BJ (cell line): ENCODE measurements at regions of chr1 and their contacts with region 1.

Region 1: DNA sequence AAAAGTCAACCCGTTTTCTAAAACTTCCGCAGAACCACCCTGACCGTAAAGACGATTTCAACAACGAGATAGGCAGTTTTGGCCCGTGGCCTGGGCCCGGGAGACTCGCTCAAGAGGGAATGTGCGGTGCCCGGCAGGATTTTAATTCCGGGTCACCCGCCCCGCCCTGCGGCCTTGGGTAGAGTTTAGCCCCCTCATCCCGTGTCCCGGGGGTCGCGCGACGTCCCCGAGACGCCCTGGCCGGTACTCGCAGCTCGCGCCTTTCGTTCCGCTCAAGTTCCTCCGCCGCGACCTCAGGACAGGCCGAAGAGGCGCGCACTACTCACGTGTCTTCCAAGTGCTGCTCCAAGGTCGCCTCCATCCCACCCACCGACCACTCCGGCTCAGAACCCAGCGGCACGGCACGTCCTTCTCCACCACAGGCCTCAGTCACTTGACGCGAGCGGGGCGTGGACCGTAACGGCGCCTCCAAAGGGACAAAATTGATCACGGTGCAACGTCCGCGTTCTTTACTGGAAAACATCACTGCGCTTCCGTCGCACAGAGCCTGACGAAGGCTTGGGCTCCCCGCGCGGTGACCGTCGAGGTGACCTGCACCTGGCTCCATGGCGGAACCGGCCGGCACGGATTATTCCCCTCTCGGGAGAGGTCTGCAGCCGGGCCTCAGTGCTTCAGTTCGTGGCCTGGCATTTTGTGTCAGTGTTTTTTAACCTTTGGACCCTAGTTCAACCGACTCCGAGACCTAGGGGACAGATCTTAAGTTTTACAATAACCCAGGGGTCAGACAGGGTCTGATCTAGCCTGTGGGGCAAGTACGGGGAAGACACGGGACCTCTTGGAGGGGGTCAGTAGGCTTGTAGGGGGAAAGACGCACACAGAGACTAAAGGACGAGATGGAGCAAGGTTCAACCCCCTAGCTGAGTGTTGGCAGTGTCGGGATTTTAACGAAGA is at the start of gene LAMTOR5:
- DNase-seq: peak; percentile 68
- H3K4me3 ChIP-seq: peak within 1 kb of the TSS; percentile 99
- H3K27me3 ChIP-seq: no peaks in the 10 kb centered on the region
- CTCF ChIP-seq: no peak
- polyA plus RNA-seq, gene LAMTOR5: 236 and 261 TPM in 2 replicates

Region 2: DNA sequence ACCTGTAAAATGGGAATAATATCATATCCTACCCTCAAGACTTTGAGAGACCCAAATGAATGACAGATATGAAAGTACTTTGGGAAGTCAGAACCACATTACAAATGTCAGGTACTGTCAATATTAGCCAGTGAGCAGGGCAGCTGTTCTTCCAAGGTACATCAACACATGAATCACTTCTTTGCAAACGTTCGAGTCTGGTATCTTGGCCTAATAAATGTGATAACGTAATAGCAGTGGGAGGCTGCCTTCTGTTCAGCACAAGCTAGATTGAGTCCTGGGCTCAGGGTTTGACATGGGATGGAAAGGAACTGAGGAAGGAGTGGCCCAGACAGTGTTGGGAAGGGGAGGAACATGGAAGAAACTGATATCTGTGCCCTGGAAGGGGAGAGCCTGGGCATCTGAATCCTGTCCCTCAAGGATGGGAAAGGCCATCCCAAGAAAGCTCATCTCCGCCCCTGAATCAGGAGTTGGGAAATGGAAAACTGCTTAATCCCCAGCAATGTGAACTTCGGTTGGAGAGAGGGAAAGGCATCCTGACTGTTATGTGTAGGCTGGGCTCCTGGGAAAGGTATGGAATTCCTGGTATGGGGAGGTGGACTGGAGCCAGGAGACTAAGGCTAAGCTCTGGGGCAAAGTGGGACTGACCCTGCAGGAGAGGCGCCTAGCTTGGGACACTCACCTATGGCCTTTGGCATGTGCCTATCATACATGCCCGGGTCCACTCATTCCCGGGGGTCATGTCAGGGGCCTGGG is 183.1 kb before region 1 on chr1:
- CTCF ChIA-PET with region 1: no interaction called
- POLR2A ChIA-PET with region 1: no interaction called
- DNase-seq: no peak
- H3K4me3 ChIP-seq: no peak overlapping the region
- H3K27me3 ChIP-seq: no peaks in the 10 kb centered on the region
- CTCF ChIP-seq: no peak

Region 3: DNA sequence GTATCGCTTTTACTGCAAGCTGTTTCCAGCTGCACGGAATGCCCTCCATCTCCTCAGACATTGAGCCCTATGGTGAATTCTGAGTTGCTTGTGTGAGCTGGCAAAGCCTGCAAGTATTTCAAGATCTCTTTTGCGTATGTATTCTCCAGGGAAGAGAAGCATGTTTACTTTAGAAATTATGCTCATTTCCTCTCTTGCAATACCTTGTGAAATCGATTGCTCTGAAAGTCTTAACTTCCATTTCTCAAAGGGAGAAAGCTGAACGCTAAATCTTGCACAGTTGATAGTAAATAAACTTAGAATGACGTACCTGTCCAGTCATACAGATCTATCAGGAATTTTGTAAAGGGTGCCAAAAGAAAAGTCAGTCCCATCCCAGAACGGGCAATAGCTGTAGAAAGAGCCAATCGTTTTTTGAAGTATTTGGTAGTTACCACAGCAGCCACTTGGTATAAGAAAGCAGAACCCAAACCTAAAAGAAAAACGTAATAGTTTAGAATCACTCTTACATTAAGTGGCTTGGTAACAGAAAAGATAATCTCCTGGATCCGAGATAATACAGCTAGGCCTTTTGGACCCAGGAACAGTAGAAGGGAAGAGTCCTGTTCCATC is 26.8 kb before region 1 on chr1:
- CTCF ChIA-PET with region 1: no interaction called
- POLR2A ChIA-PET with region 1: no interaction called
- DNase-seq: no peak
- H3K4me3 ChIP-seq: no peak overlapping the region
- H3K27me3 ChIP-seq: no peaks in the 10 kb centered on the region
- CTCF ChIP-seq: no peak

Region 4: DNA sequence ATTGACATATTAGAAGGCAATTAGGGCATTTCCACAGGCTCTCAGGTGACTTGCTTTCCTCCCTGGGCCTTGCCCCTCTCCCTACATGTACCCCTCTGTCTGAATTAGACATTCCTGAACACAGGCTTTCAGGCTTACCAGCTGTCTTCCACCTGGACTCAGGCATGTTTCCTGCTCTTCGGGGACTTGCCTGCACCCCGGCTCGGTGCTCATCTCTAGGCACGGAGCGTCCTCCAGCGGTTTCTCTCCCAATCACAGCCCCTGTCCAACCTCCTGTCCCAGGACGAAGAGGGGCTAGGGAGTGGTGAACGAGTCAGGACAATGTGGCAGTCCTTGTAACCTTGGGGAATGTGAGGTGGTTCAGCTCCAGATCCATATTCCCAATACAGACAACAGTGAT is 47.6 kb after region 1 on chr1:
- CTCF ChIA-PET with region 1: interaction called, 296 read pairs
- POLR2A ChIA-PET with region 1: no interaction called
- DNase-seq: no peak
- H3K4me3 ChIP-seq: no peak overlapping the region
- H3K27me3 ChIP-seq: peaks cover 22% of the 10 kb centered on the region
- CTCF ChIP-seq: peak; percentile 17; the same call in 1 of the 2 replicates